Sciatic nerve (tissue), 2 donors: ENCODE measurements at regions of chr14 and their contacts with region 1.

Region 1: GRCh38 chr14:51776102-51776894 is 84.1 kb upstream of the GNG2 start:
- DNase-seq: peak; percentile 77
- ATAC-seq: peak; percentile 90

Region 2: GRCh38 chr14:51283402-51284085 is 492.8 kb before region 1 on chr14:
- intact Hi-C with region 1: loop called (anchors 10 kb)
- DNase-seq: no peak
- ATAC-seq: peak; percentile 93

Region 3: DNA sequence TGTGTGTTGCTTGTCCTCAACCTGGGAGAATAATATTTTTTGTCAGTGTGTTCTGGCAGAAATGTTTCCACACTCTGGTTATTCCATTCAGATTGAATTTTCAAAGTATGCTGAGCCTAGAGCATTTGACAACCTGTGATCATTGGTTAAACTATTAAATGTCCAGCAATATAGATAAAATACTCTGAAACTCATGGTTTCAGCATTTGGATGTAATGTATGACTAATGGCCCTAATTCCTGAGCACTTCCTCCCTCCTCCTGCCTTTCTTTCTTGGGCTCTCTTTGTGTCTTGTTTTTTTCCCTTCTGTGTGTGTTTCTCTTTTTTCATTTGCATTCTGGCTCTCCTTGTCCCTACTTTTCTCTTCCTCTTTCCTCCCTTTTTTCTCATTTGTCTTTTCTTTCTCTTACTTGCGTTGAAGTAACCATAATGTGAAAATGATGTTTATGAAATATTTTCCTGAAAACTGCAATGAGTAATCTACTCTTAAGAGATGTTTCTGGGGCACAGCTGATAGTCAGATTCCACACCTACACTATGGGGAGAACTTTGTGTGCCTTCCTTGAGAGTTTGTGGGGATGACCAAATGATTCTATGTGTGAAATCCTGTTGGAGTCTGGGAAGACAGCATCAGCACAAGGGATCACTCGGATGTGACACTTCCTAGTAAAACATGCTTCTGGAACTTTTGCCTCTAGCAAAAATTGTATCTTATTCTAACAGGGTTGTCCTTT is 50.0 kb before region 1 on chr14:
- intact Hi-C with region 1: loop called (anchors 2 kb)
- DNase-seq: no peak
- ATAC-seq: no peak